PC-3 (cell line): ENCODE measurements at regions of chr2 and their contacts with region 1.

Region 1: GRCh38 chr2:53536583-53537361 is 230.8 kb upstream of the CHAC2 start:
- DNase-seq: no peak
- ATAC-seq: no peak
- H3K4me3 ChIP-seq: no peak overlapping the region
- H3K27ac ChIP-seq: no peak overlapping the region
- H3K4me1 ChIP-seq: no peaks in the 10 kb centered on the region
- H3K27me3 ChIP-seq: no peaks in the 10 kb centered on the region
- CTCF ChIP-seq: no peak

Region 2: GRCh38 chr2:53508667-53509066 is 28.1 kb before region 1 on chr2:
- CTCF ChIA-PET with region 1: no interaction called
- POLR2A ChIA-PET with region 1: no interaction called
- intact Hi-C with region 1: no loop called
- DNase-seq: peak; percentile 27
- ATAC-seq: no peak
- H3K4me3 ChIP-seq: no peak overlapping the region
- H3K27ac ChIP-seq: no peak overlapping the region
- H3K4me1 ChIP-seq: peaks cover 46% of the 10 kb centered on the region
- H3K27me3 ChIP-seq: no peaks in the 10 kb centered on the region
- CTCF ChIP-seq: peak; percentile 31; the same call in 1 of the 2 replicates

Region 3: DNA sequence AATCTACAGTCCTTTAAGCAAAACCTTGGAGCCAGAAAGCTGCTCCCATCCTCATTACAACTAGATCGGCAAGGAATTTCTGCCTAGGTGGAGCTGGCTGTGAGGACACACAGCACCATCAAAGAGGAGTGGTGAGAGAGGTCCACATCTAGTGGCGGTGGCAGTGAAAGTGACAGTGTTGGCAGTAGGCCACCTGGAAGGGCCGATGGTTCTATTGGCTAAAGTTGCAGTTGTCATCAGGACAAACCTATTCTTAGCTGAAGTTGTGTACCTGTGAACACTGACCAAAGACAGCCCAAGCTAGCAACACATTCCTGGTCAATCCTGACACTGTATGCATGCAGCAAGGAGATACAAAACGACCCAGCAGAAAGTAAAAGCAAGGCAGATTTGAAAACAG is 12.7 kb after region 1 on chr2:
- CTCF ChIA-PET with region 1: no interaction called
- POLR2A ChIA-PET with region 1: interaction called, 12 read pairs
- intact Hi-C with region 1: no loop called
- DNase-seq: no peak
- ATAC-seq: no peak
- H3K4me3 ChIP-seq: no peak overlapping the region
- H3K27ac ChIP-seq: no peak overlapping the region
- H3K4me1 ChIP-seq: 0 out of 2 replicates have a peak, but pooled peaks cover 5% of the 10 kb centered on the region
- H3K27me3 ChIP-seq: no peaks in the 10 kb centered on the region
- CTCF ChIP-seq: no peak